Left ventricle myocardium superior (tissue), 1 donor: ENCODE measurements at regions of chr3 and their contacts with region 1.

Region 1: GRCh38 chr3:161838021-161838420 is 341.4 kb downstream of the OTOL1 start:
- DNase-seq: no peak
- ATAC-seq: no peak

Region 2: GRCh38 chr3:161770484-161771386 is 67.3 kb before region 1 on chr3:
- intact Hi-C with region 1: loop called (anchors 10 kb)
- DNase-seq: no peak
- ATAC-seq: no peak